Activated CD4-positive, alpha-beta memory T cell treated with anti-CD3 and anti-CD28 coated beads for 36 hours (primary cell): ENCODE measurements at regions of chr2 and their contacts with region 1.

Region 1: GRCh38 chr2:148644883-148645538 is 460 bp downstream of the EPC2 start:
- DNase-seq: peak; percentile 96
- H3K4me3 Mint-ChIP-seq: peak overlapping the region; percentile 86
- H3K27ac Mint-ChIP-seq: peak overlapping the region; percentile 98
- H3K4me1 Mint-ChIP-seq: peaks cover 36% of the 10 kb centered on the region
- H3K27me3 Mint-ChIP-seq: peaks cover 10% of the 10 kb centered on the region

Region 2: GRCh38 chr2:147297820-147298219 is 1347.2 kb before region 1 on chr2:
- CTCF ChIA-PET with region 1: no interaction called
- POLR2A ChIA-PET with region 1: no interaction called
- intact Hi-C with region 1: loop called (anchors 10 kb)
- DNase-seq: peak; percentile 58
- H3K4me3 Mint-ChIP-seq: peak overlapping the region; percentile 39
- H3K27ac Mint-ChIP-seq: peak overlapping the region; percentile 89
- H3K4me1 Mint-ChIP-seq: peaks cover 73% of the 10 kb centered on the region
- H3K27me3 Mint-ChIP-seq: no peaks in the 10 kb centered on the region

Region 3: GRCh38 chr2:148524519-148524919 is 120.5 kb before region 1 on chr2:
- CTCF ChIA-PET with region 1: interaction called, 5 read pairs
- POLR2A ChIA-PET with region 1: interaction called, 6 read pairs
- intact Hi-C with region 1: loop called (anchors 1 kb)
- DNase-seq: peak; percentile 83
- H3K4me3 Mint-ChIP-seq: peak overlapping the region; percentile 28
- H3K27ac Mint-ChIP-seq: peak overlapping the region; percentile 84
- H3K4me1 Mint-ChIP-seq: peaks cover 79% of the 10 kb centered on the region
- H3K27me3 Mint-ChIP-seq: no peaks in the 10 kb centered on the region

Region 4: DNA sequence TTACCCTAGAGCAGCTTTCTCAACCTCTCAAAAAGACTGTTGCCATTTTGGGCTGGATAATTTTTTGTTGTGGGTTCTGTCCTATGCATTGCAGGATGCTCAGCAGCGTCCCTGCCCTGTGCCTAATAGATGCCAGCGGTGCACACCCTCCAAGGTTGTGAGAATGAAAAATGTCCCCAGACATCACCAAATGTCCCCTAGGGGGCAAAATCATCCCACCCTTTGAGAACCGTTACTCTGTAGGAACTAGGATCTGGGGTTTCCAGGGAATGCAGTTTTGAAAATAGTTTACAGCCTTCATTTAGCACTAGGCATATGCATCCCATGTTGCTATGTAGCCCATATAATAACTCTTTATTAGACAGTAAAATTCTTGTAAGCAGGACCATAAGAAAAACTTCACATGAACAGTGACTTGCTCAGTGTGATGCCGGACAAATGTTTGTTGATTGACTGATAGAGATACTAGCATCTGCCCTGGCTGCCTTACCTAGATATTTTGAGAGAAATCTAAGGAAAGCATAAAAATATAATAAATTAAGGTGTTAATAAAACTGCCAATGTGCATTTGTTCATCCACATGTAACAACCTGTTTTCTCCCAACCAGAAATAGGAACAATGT is 79.6 kb before region 1 on chr2:
- CTCF ChIA-PET with region 1: no interaction called
- POLR2A ChIA-PET with region 1: no interaction called
- intact Hi-C with region 1: no loop called
- DNase-seq: no peak
- H3K4me3 Mint-ChIP-seq: no peak overlapping the region
- H3K27ac Mint-ChIP-seq: no peak overlapping the region
- H3K4me1 Mint-ChIP-seq: peaks cover 10% of the 10 kb centered on the region
- H3K27me3 Mint-ChIP-seq: no peaks in the 10 kb centered on the region

Region 5: DNA sequence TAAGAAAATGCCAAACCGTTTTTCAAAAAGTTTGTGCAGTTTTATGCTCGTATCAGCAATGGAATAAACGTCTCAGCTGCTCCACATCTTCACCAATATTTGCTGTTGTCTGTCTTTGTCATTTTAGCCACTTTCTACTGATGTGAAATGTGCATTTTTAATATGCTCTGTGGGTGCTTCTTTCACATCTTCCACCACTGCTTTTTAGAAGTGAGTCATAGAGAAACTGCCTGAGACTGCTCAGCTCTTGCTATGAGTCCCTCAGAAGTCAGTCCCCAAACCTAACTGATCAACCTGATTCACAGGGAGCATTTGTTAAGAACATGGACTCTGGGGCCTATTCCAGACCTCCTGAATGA is 41.5 kb before region 1 on chr2:
- CTCF ChIA-PET with region 1: interaction called, 6 read pairs
- POLR2A ChIA-PET with region 1: interaction called, 11 read pairs
- intact Hi-C with region 1: loop called (anchors 1 kb)
- DNase-seq: peak; percentile 45
- H3K4me3 Mint-ChIP-seq: no peak overlapping the region
- H3K27ac Mint-ChIP-seq: peak overlapping the region; percentile 87
- H3K4me1 Mint-ChIP-seq: peaks cover 14% of the 10 kb centered on the region
- H3K27me3 Mint-ChIP-seq: peaks cover 7% of the 10 kb centered on the region

Region 6: DNA sequence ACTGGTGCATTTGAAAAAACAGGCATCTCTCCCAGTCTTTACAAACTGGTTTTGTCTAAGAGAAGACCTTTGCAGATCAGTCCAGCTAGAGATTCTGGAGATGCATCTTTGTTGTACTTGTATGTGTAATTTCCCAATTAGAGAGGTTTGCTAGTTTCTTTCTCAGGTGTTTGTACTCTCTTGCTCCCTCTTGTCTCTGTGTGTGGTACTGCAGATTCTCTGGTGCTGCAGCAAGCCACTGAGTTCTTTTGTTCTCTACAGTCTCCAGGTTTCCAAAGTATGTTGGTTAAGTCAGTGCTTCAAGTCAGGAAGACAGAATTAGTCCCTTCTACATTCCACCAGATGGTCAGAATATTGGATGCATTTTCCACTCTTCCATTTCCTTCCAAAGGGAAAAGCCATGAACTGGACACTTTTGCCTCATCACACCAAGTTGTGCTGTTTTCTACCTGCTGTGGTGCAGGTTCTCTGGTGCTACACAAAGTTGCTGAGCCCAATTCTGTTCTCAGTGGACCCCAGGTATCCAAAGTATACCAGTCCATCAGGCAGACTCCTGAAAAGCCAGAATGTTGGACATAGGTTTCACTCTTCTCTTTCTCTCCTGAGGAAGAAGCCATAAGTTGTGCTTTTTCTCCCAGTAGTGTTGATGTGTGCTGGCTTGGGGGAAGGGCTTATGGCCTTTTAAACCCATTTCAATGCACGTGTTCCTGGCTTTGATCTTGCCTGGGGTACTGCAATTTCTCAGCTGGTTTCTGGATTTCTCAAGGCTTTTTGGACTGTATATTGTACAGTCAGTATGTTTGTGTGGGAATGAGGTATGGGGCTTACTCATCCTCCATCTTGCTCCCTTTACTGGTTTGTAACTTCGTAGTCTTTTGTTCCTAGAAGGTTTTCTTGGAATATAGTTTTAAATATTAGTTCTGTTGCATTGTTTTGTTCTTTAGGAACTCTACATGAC is 29.3 kb after region 1 on chr2:
- CTCF ChIA-PET with region 1: interaction called, 7 read pairs
- POLR2A ChIA-PET with region 1: no interaction called
- intact Hi-C with region 1: loop called (anchors 1 kb)
- DNase-seq: peak; percentile 43
- H3K4me3 Mint-ChIP-seq: no peak overlapping the region
- H3K27ac Mint-ChIP-seq: peak overlapping the region; percentile 14
- H3K4me1 Mint-ChIP-seq: peaks cover 64% of the 10 kb centered on the region
- H3K27me3 Mint-ChIP-seq: no peaks in the 10 kb centered on the region

Region 7: GRCh38 chr2:148842050-148842449 is 197.0 kb after region 1 on chr2:
- CTCF ChIA-PET with region 1: no interaction called
- POLR2A ChIA-PET with region 1: no interaction called
- intact Hi-C with region 1: no loop called
- DNase-seq: no peak
- H3K4me3 Mint-ChIP-seq: no peak overlapping the region
- H3K27ac Mint-ChIP-seq: no peak overlapping the region
- H3K4me1 Mint-ChIP-seq: peaks cover 3% of the 10 kb centered on the region
- H3K27me3 Mint-ChIP-seq: peaks cover 3% of the 10 kb centered on the region

Region 8: GRCh38 chr2:148989882-148990493 is 345.0 kb after region 1 on chr2:
- CTCF ChIA-PET with region 1: no interaction called
- POLR2A ChIA-PET with region 1: no interaction called
- intact Hi-C with region 1: loop called (anchors 10 kb)
- DNase-seq: peak; percentile 55
- H3K4me3 Mint-ChIP-seq: no peak overlapping the region
- H3K27ac Mint-ChIP-seq: no peak overlapping the region
- H3K4me1 Mint-ChIP-seq: peaks cover 2% of the 10 kb centered on the region
- H3K27me3 Mint-ChIP-seq: no peaks in the 10 kb centered on the region